Vagina (tissue), 2 donors: ENCODE measurements at regions of chr14 and their contacts with region 1.

Region 1: GRCh38 chr14:59964251-59965007 is 44.5 kb downstream of the LRRC9 start:
- DNase-seq: no peak
- H3K4me3 ChIP-seq: no peak overlapping the region
- H3K27ac ChIP-seq: no peak overlapping the region
- H3K4me1 ChIP-seq: no peaks in the 10 kb centered on the region
- H3K27me3 ChIP-seq: no peaks in the 10 kb centered on the region
- CTCF ChIP-seq: no peak
- POLR2A ChIP-seq: no peak

Region 2: DNA sequence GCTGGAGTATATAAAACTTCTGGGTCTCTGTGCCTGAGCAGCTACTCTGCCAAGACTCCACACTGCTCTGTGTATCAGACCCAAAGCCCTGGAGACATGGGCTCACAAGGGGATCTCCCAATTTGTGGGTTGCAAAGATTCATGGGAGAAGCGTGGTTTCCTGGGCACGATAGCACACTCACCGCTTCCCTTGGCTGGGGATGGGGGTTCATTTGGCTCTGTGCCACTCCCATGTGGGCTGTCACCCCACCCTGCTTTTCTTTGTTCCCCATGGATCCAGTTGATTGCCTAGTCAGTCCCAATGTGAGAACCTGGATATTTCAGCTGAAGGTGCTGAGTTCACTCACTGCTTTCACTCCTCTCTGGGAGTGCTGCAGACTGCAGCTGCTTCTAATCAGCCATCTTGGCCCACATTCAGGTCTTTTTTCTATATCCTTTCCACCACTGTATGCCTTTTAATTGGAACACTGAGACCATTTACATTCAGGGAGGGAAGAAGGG is 87.3 kb after region 1 on chr14:
- intact Hi-C with region 1: loop called (anchors 10 kb)
- DNase-seq: no peak
- H3K4me3 ChIP-seq: no peak overlapping the region
- H3K27ac ChIP-seq: no peak overlapping the region
- H3K4me1 ChIP-seq: no peaks in the 10 kb centered on the region
- H3K27me3 ChIP-seq: no peaks in the 10 kb centered on the region
- CTCF ChIP-seq: no peak
- POLR2A ChIP-seq: no peak

Region 3: DNA sequence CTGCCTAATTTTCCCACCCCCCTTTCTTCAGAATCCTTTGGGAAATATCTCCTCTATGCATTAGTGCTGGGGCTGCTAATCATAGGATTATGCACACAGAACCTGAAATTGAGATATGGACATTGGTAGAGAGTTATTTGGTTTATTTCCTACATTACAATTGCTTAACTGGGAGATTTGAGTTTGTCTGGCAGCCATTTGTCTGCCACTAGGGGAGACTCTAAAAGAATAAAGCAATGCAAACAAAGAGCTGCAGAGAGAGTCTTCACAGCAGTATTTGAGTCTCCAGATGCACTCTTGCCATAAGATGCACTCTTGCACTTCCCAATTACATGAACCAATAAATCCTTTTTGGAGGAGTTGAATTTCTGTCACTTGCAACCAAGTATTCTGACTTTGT is 115.3 kb after region 1 on chr14:
- intact Hi-C with region 1: no loop called
- DNase-seq: no peak
- H3K4me3 ChIP-seq: no peak overlapping the region
- H3K27ac ChIP-seq: no peak overlapping the region
- H3K4me1 ChIP-seq: no peaks in the 10 kb centered on the region
- H3K27me3 ChIP-seq: no peaks in the 10 kb centered on the region
- CTCF ChIP-seq: no peak
- POLR2A ChIP-seq: no peak

Region 4: DNA sequence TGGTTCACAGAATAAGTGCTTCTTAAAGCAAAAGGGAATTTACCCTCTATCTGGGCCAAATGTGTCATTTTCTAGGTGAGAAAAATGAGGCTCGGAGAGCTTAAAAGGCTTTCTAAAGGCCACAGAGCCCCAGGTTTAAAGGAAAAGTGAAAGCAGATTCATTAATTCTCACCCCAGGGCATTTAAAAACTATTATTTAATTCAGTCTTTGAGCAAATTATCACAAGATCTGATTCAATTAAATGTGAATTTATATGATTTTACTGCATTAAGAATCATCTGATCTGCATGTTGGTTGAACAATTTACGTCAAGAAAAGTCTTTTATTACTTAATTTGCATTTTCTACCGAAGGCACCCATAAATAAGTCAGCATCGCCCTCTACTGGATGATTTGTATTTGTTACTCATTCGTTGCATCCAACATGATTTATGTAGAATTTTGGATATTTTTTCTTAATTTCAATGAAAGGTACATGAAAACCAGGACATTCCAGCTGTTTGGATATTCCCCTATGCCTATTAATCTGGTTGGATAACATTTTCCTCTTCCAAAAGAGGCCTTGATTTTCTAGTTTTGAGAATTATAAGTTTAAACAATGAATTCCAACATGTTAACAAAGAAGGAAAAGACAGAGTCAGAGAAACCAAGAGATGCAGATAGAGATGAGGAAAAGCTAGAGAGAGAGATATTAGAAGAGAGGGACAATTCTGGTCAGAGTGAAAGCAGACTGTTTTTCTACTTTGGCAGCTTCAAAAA is 219.9 kb after region 1 on chr14:
- intact Hi-C with region 1: loop called (anchors 10 kb)
- DNase-seq: no peak
- H3K4me3 ChIP-seq: peak overlapping the region; percentile 40 to 45
- H3K27ac ChIP-seq: peak overlapping the region; percentile 49
- H3K4me1 ChIP-seq: no peaks in the 10 kb centered on the region
- H3K27me3 ChIP-seq: no peaks in the 10 kb centered on the region
- CTCF ChIP-seq: peak; percentile 70 to 87 (median 76)
- POLR2A ChIP-seq: no peak